ENCODE measurements at regions of chr4 and their contacts with region 1.

Region 1: DNA sequence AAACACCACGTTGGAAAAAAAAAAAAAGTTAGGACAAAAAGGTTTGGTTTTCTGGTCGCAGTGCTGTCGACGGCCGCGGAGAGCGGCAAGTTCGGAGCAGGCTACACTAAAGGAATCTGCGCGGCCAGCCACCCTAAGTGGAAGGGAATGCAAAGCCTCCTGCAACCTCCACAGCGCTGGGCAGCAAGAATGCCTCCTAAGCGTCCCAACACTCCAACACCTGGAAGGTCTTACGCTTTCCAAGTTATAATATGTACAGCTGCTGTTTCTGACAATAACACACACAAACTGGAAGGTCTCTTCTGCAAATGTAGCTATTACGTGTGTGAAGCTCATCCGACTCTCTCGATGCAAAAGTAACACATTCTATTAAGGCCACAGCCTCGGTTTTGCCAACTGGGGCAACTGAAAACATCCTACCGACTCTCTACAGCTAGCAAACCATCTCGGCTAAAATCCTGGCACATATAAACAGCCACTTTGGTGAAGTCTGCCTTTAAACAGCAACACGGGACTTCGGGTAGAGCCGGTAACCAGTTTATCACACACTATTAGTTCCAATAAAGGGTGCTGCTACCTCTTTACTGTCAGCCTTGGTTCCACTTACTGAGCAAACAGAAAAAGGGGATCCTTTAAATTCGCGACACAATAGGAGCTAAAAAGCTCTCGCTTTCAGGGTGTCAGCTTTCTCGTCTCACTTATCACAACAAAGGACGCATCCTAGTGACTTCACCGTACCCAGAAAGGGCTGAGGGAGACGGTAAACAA is 895 bp downstream of the SMIM14 start:
- DNase-seq: no peak
- ATAC-seq: peak; percentile 39
- H3K4me3 ChIP-seq: peak overlapping the region; percentile 88 to 95
- H3K27ac ChIP-seq: peak overlapping the region; percentile 98
- H3K4me1 ChIP-seq: peaks cover 28% of the 10 kb centered on the region
- H3K27me3 ChIP-seq: no peaks in the 10 kb centered on the region
- CTCF ChIP-seq: no peak

Region 2: DNA sequence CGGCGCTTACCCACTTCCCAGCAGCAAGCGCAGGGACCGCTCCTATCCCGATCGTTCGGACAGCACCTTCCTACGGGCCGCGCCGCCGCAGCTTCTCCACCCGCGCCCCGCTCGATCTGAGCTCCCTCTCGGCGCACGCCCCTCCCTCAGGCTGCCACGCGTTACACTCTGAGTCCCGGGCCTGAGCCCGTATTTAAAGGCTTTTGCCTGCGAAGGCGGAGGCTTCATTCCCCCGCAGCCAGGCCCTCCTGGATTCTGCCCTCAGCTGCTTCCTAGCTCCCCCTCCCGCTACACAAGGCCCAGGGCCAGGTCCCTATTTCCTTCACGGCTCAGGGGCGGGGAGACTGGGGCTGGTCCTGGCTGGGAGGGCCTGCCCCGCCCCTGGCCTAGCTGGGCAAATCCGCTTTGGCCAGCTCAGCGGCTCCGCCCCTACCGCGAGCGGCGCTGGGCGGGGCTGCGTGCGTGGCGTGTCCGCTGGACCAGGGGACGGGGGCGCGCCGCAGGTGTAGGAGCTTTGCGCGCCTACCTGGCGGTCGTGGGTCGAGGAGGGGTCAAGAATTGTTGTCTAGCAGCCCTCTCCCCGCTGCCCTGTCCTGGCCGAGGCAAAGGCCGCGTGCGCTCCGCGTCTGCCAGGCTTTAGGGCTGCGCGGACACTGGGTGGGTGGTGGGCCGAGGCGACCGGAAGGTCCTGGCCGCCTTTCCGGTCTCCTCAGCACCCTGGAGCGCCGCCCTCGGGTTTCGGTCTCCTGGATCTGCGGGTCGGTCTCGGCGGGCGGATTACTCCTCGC is 110.3 kb before region 1 on chr4 and contains the start of gene UGDH:
- CTCF ChIA-PET with region 1: no interaction called
- POLR2A ChIA-PET with region 1: interaction called, 21 read pairs
- in situ Hi-C with region 1: no loop called
- intact Hi-C with region 1: no loop called
- DNase-seq: peak; percentile 74
- ATAC-seq: peak; percentile 95
- H3K4me3 ChIP-seq: peak within 1 kb of the TSS; percentile 92 to 96
- H3K27ac ChIP-seq: peak within 1 kb of the TSS; percentile 98
- H3K4me1 ChIP-seq: peaks cover 10% of the 10 kb centered on the region
- H3K27me3 ChIP-seq: no peaks in the 10 kb centered on the region
- CTCF ChIP-seq: no peak
- total RNA-seq, gene UGDH: 373 TPM